Gastrocnemius medialis (tissue), 4 donors: ENCODE measurements at regions of chr11 and their contacts with region 1.

Region 1: GRCh38 chr11:78228467-78228866 is 39.7 kb downstream of the USP35 start:
- DNase-seq: no peak
- ATAC-seq: peak in 1 of 2 donors; percentile 60
- H3K4me3 ChIP-seq: no peak overlapping the region
- H3K27ac ChIP-seq: no peak overlapping the region
- H3K4me1 ChIP-seq: peaks cover 21% of the 10 kb centered on the region in 2 donors
- H3K27me3 ChIP-seq: no peaks in the 10 kb centered on the region
- CTCF ChIP-seq: peak in 4 of 5 experiments; percentile 45 to 66 (median 58)
- POLR2A ChIP-seq: no peak

Region 2: DNA sequence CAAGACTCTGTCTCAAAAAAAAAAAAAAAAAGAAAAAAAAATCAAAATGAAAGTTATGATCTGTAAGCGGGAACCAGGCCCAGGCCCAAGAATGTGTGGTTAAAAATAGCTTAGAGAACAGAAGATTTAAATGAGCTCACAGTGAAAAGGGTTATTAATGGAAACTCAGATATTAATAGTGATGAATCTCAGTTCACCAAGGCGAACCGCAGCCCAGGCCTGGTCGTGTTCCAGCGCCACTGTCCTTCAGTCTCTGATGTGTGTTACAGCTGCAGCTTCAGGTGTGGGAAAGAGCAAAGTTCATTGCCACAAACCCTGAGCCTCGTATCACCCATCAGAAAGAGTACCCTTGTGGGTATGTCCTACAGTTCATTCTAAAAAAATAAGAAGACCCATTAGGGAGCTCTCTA is 82.0 kb after region 1 on chr11:
- in situ Hi-C with region 1: no loop called
- intact Hi-C with region 1: loop called (anchors 5 kb)
- DNase-seq: peak; percentile 12 to 40
- ATAC-seq: peak; percentile 76 to 81
- H3K4me3 ChIP-seq: peak overlapping the region in 3 of 4 donors; percentile 23 to 36 (median 33)
- H3K27ac ChIP-seq: peak overlapping the region in 3 of 4 donors; percentile 44 to 76 (median 58)
- H3K4me1 ChIP-seq: peaks cover 31 to 40% of the 10 kb centered on the region in 2 donors
- H3K27me3 ChIP-seq: no peaks in the 10 kb centered on the region
- CTCF ChIP-seq: no peak
- POLR2A ChIP-seq: no peak

Region 3: DNA sequence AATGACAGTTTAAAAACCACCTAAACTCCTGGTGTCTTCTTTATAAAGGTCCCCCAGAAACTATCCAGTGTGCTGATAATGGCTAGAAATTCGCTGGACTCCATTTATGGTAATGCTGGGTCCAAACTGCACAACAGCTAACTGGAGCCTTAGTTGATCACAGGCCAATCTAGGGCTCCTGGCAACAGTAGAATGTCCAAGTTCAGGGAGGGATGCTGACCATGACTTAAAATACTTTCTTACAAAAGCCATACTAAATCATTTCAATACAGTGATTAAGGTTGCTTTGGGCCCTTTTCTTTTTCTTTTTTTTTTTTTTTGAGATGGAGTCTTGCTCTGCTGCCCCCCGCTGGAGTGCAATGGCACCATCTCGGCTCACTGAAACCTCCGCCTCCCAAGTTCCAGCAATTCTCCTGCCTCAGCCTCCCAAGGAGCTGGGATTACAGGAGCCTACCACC is 203.6 kb after region 1 on chr11:
- in situ Hi-C with region 1: loop called in 2 of 4 experiments (anchors 10 kb)
- intact Hi-C with region 1: no loop called
- DNase-seq: no peak
- ATAC-seq: no peak
- H3K4me3 ChIP-seq: no peak overlapping the region
- H3K27ac ChIP-seq: no peak overlapping the region
- H3K4me1 ChIP-seq: no peaks in the 10 kb centered on the region
- H3K27me3 ChIP-seq: no peaks in the 10 kb centered on the region
- CTCF ChIP-seq: peak in 3 of 5 experiments; percentile 19 to 49 (median 28)
- POLR2A ChIP-seq: no peak

Region 4: DNA sequence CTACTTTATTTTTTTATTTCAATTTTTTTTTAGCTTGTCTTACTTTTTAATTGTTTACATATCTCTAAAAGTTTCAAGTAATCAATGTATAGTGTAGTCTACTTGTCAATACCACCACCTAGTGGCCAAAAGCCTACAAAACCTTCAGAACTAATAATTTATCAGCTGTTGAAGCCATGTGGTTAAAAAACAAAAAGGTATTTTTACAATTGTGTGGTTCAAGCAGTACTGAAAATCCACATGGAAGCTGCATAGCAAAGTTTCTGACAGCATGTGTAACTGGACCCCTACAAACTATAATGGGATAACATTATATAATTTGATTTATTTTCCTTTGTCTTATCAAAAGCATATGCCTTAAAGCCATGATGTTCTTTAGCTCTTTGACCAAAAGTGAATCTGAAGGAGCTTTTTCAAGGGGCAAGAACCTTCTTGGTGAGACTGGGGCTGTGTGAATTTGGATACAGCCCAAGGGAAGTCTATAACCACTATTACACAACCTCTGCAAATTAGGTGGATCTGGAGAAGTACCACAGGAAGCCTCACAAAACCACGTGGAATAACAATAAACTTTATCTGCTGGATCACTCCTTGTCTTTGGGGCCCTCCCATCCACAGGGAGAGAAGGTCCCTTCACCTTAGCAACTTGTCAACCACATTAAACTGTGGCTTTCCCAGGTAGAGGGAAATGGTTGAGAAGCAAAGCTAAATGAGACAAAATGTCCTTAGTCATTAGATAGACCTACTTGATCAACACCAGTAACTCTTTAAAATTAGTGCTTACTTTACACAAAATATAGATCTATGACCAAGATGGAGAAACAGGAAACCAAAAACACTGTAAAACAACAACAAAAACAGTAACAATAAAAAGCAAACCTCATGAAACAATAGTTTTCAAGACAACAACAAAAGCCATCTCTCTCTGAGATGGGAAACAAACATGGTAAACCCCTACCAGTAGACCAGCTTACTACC is 336.3 kb after region 1 on chr11:
- in situ Hi-C with region 1: loop called (anchors 10 to 25 kb)
- intact Hi-C with region 1: loop called (anchors 1 kb)
- DNase-seq: no peak
- ATAC-seq: no peak
- H3K4me3 ChIP-seq: no peak overlapping the region
- H3K27ac ChIP-seq: no peak overlapping the region
- H3K4me1 ChIP-seq: peaks cover 4 to 11% of the 10 kb centered on the region in 2 donors
- H3K27me3 ChIP-seq: no peaks in the 10 kb centered on the region
- CTCF ChIP-seq: peak; percentile 50 to 78 (median 60)
- POLR2A ChIP-seq: no peak